Activated CD8-positive, alpha-beta memory T cell treated with anti-CD3 and anti-CD28 coated beads, Interleukin-2, amount 10 ng/mL, durations not matched to agents 7 days and 5 days (primary cell): ENCODE measurements at regions of chr2 and their contacts with region 1.

Region 1: DNA sequence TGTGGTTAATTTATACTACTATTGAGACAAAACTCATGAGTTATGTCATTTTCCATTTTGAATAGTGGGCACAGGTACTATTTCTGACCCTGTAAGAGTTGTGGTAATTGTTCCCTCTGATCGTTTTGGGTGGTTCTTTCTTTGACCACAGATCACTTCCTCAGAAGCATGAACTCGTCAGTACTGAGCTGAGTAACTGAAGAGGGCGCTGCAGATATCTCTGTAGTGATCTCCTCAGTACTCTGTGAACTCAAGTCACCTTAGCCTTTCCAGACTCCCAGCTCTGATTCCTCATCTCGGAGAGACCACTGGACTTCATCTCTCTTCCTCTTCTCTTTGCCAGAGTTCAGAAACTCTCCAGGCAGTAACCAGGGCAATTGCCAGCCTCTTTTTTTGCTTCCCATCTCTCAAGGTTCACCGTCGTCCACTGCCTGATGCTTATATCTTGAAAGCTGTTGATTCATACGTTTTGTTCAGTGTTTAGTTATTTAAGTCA is 9.4 kb upstream of the IL1RL1 start:
- DNase-seq: peak; percentile 82
- ATAC-seq: peak; percentile 99
- H3K4me3 Mint-ChIP-seq: peak overlapping the region; percentile 12
- H3K27ac Mint-ChIP-seq: peak overlapping the region; percentile 60
- H3K4me1 Mint-ChIP-seq: peaks cover 29% of the 10 kb centered on the region
- H3K27me3 Mint-ChIP-seq: peaks cover 10% of the 10 kb centered on the region

Region 2: GRCh38 chr2:102276549-102277201 is 25.2 kb before region 1 on chr2:
- CTCF ChIA-PET with region 1: interaction called, 12 read pairs
- DNase-seq: peak; percentile 60
- ATAC-seq: peak; percentile 77
- H3K4me3 Mint-ChIP-seq: no peak overlapping the region
- H3K27ac Mint-ChIP-seq: peak overlapping the region; percentile 63
- H3K4me1 Mint-ChIP-seq: peaks cover 52% of the 10 kb centered on the region
- H3K27me3 Mint-ChIP-seq: no peaks in the 10 kb centered on the region

Region 3: DNA sequence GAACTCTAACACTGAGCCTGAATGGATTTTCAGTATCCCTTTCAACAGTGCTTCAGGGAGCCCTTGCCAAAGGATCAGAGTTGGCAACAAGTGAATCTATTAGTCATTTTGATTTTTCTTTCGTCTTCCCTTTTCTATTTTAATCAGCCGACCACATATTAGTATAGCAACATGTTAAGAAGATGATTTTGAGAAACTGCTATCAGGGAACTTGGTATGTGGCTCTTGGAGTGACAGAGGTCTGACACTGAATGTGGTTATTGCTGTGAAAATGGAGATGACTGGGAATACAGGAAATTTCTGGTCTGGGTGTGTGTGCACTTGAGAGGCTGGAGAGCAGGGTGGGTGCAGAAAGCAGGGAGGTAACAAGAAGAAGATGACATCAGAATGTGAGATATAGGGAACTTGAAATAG is 19.2 kb before region 1 on chr2:
- CTCF ChIA-PET with region 1: interaction called, 12 read pairs
- DNase-seq: no peak
- ATAC-seq: no peak
- H3K4me3 Mint-ChIP-seq: no peak overlapping the region
- H3K27ac Mint-ChIP-seq: no peak overlapping the region
- H3K4me1 Mint-ChIP-seq: peaks cover 22% of the 10 kb centered on the region
- H3K27me3 Mint-ChIP-seq: peaks cover 10% of the 10 kb centered on the region

Region 4: GRCh38 chr2:102291318-102292251 is 10.3 kb before region 1 on chr2:
- CTCF ChIA-PET with region 1: interaction called, 23 read pairs
- DNase-seq: no peak
- ATAC-seq: peak; percentile 45
- H3K4me3 Mint-ChIP-seq: no peak overlapping the region
- H3K27ac Mint-ChIP-seq: peak overlapping the region; percentile 4
- H3K4me1 Mint-ChIP-seq: peaks cover 43% of the 10 kb centered on the region
- H3K27me3 Mint-ChIP-seq: peaks cover 9% of the 10 kb centered on the region

Region 5: GRCh38 chr2:102350137-102350793 is 48.4 kb after region 1 on chr2:
- CTCF ChIA-PET with region 1: interaction called, 16 read pairs
- DNase-seq: no peak
- ATAC-seq: peak; percentile 57
- H3K4me3 Mint-ChIP-seq: no peak overlapping the region
- H3K27ac Mint-ChIP-seq: no peak overlapping the region
- H3K4me1 Mint-ChIP-seq: peaks cover under 1% of the 10 kb centered on the region
- H3K27me3 Mint-ChIP-seq: peaks cover 15% of the 10 kb centered on the region